Activated naive CD4-positive, alpha-beta T cell treated with anti-CD3 and anti-CD28 coated beads, Interleukin-2, amount 10 ng/mL, durations not matched to agents 7 days and 5 days (primary cell): ENCODE measurements at regions of chr11 and their contacts with region 1.

Region 1: DNA sequence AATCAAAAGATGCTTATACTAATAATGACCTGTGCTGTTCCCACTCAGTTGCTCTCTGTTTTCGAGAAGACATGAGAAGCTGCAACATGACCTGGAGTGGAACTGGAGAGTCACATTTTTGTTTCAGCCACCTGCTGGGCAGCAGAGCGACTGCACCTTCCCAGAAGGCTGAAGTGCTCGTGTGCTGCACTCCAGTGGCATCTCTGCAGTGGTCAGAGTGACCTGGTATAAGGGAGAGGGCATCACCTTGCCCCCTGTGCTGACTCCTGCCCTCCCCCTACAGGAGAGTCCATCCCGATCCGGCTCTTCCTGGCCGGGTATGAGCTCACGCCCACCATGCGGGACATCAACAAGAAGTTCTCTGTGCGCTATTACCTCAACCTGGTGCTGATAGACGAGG is 8.5 kb downstream of the THYN1 start:
- DNase-seq: peak; percentile 41
- H3K4me3 Mint-ChIP-seq: no peak overlapping the region
- H3K27ac Mint-ChIP-seq: no peak overlapping the region
- H3K4me1 Mint-ChIP-seq: peaks cover 8% of the 10 kb centered on the region
- H3K27me3 Mint-ChIP-seq: no peaks in the 10 kb centered on the region

Region 2: GRCh38 chr11:134207538-134208239 is 37.0 kb before region 1 on chr11:
- CTCF ChIA-PET with region 1: interaction called, 32 read pairs
- DNase-seq: peak; percentile 80
- H3K4me3 Mint-ChIP-seq: no peak overlapping the region
- H3K27ac Mint-ChIP-seq: peak overlapping the region; percentile 11
- H3K4me1 Mint-ChIP-seq: peaks cover 11% of the 10 kb centered on the region
- H3K27me3 Mint-ChIP-seq: no peaks in the 10 kb centered on the region

Region 3: GRCh38 chr11:134233729-134234179 is 10.9 kb before region 1 on chr11:
- CTCF ChIA-PET with region 1: interaction called, 10 read pairs
- DNase-seq: no peak
- H3K4me3 Mint-ChIP-seq: no peak overlapping the region
- H3K27ac Mint-ChIP-seq: no peak overlapping the region
- H3K4me1 Mint-ChIP-seq: peaks cover 43% of the 10 kb centered on the region
- H3K27me3 Mint-ChIP-seq: no peaks in the 10 kb centered on the region